ENCODE measurements at regions of chr21 and their contacts with region 1.

Region 1: DNA sequence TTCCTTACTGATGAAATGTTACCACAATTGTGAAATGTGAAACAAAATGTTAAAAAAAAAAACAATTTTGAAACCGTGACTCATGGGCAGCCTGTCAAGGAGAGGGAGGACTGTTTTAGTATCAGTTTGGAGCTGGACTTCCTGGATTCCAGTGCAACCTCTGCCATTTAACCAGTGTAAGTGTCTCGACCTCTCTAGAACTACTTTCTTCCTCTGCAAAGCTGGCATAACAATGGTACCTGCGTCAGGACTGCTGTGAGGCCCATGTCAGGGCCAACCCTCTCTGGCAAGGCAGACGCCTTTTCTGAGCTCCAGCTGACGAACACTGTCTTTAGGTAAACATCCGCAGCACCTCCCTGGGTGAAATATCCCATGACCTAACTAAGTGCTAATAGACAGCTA is 20.9 kb downstream of the URB1 start:
- DNase-seq: no peak
- H3K4me3 ChIP-seq: no peak overlapping the region
- H3K27ac ChIP-seq: no peak overlapping the region
- H3K4me1 ChIP-seq: no peaks in the 10 kb centered on the region
- H3K27me3 ChIP-seq: no peaks in the 10 kb centered on the region

Region 2: GRCh38 chr21:32554832-32555436 is 183.0 kb after region 1 on chr21:
- CTCF ChIA-PET with region 1: no interaction called
- POLR2A ChIA-PET with region 1: interaction called, 13 read pairs
- DNase-seq: no peak
- H3K4me3 ChIP-seq: no peak overlapping the region
- H3K27ac ChIP-seq: no peak overlapping the region
- H3K4me1 ChIP-seq: peaks cover 0 to under 1% (median under 1%) of the 10 kb centered on the region in 4 experiments
- H3K27me3 ChIP-seq: peaks cover 0 to 4% (median 0%) of the 10 kb centered on the region in 5 experiments